Activated CD8-positive, alpha-beta T cell treated with anti-CD3 and anti-CD28 coated beads for 36 hours (primary cell): ENCODE measurements at regions of chr4 and their contacts with region 1.

Region 1: DNA sequence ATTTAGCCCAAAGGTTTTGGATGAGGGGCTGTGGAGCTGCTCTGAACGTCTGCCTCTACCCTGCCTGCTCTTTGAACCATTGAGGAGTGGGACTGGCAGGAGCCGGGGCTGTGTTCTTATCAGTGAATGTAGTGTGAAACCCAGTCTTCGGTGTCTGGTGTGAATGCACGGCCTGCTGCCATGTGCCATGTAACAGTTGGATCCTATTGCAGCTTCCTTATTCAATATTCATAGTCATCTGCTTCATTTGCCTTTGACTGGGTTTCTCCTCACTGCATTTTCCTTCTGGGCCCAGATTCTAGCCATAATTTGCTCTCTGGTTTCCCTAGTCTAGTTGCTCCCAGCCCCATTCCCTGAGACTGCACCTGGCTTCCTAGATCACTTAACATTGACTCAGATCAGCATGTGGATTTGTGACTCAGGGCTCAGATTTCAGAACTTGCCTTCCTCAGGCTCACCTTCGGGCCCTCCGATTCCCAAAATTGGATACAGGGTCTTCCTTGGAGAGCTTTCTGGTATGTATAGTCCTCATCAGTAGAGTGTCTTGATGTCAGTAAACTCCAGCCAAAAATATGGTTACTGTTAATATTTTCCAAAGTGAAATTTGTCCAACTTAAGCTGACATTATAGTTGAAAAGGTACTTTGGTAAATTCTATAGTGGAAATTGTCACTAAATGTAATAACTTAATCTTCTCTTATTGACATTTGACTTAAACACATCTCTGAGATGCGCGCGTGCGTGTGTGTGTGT is 94.0 kb upstream of the DDIT4L start:
- DNase-seq: no peak
- ATAC-seq: no peak
- H3K4me3 Mint-ChIP-seq: no peak overlapping the region
- H3K27ac Mint-ChIP-seq: no peak overlapping the region
- H3K4me1 Mint-ChIP-seq: no peaks in the 10 kb centered on the region
- H3K27me3 Mint-ChIP-seq: peaks cover 6% of the 10 kb centered on the region
- CTCF ChIP-seq: no peak

Region 2: DNA sequence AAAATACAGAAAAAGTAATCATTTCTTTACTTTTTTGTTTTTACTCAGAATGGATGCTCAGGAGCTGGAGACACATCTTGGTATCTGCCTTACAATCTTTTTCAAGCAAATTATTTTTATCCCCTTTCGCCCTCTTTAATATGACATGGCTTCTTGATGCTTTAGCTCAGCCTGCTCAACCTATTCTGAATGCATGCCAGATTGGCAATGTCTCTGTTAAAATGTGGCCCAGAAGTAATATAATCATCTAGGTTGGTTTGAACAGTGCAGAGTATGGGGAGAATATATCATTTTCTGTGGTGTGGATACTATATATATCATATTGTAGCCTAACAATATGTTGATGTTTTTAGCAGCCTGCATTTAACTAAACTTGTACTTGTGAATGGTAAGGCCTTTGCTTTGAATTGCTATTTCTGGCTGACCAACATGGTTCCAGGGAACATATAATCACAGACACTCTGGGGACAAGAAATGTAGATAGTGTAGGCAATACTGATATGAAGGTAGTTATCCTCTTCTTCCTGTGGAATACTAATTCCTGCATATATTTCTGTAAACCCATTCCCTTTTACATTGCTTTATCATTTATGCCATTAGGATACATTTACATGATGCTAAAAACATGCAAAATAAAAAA is 780.4 kb after region 1 on chr4:
- CTCF ChIA-PET with region 1: no interaction called
- POLR2A ChIA-PET with region 1: no interaction called
- intact Hi-C with region 1: loop called (anchors 5 kb)
- DNase-seq: no peak
- ATAC-seq: no peak
- H3K4me3 Mint-ChIP-seq: no peak overlapping the region
- H3K27ac Mint-ChIP-seq: no peak overlapping the region
- H3K4me1 Mint-ChIP-seq: no peaks in the 10 kb centered on the region
- H3K27me3 Mint-ChIP-seq: no peaks in the 10 kb centered on the region
- CTCF ChIP-seq: no peak